Cardiac septum (tissue), 1 donor: ENCODE measurements at regions of chr4 and their contacts with region 1.

Region 1: GRCh38 chr4:52376132-52376704 is 282.9 kb downstream of the USP46 start:
- DNase-seq: no peak

Region 2: GRCh38 chr4:52234561-52235440 is 141.4 kb before region 1 on chr4:
- intact Hi-C with region 1: loop called (anchors 10 kb)
- DNase-seq: no peak

Region 3: GRCh38 chr4:52665592-52665991 is 289.4 kb after region 1 on chr4:
- intact Hi-C with region 1: loop called (anchors 5 kb)
- DNase-seq: no peak